ENCODE measurements at regions of chr7 and their contacts with region 1.

Region 1: GRCh38 chr7:50696810-50697582 is 85.7 kb downstream of the GRB10 start:
- DNase-seq: no peak
- H3K4me3 ChIP-seq: no peak overlapping the region
- H3K27ac ChIP-seq: no peak overlapping the region
- H3K4me1 ChIP-seq: no peaks in the 10 kb centered on the region
- H3K27me3 ChIP-seq: no peaks in the 10 kb centered on the region
- CTCF ChIP-seq: peak; percentile 55

Region 2: DNA sequence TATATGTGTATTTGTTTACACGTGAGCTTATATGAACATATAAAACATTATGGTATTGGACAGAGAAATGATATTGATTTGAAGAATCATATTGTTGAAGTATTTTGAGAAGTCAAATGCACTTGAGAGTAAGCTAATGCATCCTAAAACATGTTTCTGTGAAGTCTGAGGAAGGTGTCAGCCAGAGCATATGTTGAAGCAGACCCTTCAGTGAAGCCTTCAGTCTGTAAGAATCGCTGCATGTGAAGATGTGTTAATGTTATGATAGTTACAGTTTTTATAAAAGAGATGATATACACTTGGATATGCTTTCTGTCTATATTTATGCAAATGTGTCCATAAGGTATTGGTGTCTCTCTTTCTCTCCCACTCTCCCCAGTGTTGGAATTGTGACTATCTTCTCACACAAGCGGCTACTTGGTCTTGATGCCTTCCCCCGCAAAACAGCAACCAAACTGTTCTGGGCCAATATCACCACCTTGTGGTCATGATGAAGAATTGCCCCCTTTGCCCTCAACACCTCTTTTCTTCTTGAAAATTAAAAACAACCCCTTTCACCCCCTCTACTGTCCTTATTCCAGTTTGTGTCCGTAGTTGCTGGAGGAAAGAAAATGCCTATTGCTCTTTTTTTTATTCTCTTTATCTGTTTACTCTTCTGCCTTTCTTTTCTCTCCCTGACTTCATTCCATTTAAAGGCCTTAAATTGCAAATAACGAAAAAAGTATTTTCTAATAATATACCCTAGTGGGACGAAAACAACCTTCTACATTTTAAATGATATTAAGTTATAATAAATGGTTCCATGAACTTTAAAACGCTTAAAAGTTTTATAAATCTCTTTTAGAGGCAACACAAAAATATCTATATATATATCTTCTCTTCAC is 327.6 kb before region 1 on chr7:
- intact Hi-C with region 1: no loop called
- DNase-seq: no peak
- H3K4me3 ChIP-seq: no peak overlapping the region
- H3K27ac ChIP-seq: no peak overlapping the region
- H3K4me1 ChIP-seq: no peaks in the 10 kb centered on the region
- H3K27me3 ChIP-seq: no peaks in the 10 kb centered on the region
- CTCF ChIP-seq: peak; percentile 33

Region 3: DNA sequence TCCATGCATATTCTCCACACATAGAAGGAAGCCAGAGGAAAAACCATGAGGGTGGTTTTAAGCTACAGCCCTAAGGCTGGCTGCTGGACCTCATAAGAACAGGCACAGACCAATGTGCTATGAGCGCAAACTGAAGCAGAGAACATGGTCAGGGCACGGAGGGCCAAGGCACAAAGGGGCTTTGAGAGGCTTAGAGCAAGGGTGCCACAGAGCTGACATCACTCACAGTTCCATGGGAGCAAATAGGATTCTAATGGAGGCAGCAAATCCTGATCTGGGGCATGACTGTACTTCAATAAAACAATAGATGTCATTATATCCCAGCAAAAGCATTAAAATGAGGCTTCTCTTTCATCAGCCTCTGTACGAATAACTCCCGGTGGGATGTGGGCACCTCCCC is 457.2 kb after region 1 on chr7:
- intact Hi-C with region 1: loop called (anchors 10 kb)
- DNase-seq: no peak
- H3K4me3 ChIP-seq: no peak overlapping the region
- H3K27ac ChIP-seq: no peak overlapping the region
- H3K4me1 ChIP-seq: no peaks in the 10 kb centered on the region
- H3K27me3 ChIP-seq: no peaks in the 10 kb centered on the region
- CTCF ChIP-seq: no peak